HepG2 (cell line): ENCODE measurements at regions of chr22 and their contacts with region 1.

Region 1: DNA sequence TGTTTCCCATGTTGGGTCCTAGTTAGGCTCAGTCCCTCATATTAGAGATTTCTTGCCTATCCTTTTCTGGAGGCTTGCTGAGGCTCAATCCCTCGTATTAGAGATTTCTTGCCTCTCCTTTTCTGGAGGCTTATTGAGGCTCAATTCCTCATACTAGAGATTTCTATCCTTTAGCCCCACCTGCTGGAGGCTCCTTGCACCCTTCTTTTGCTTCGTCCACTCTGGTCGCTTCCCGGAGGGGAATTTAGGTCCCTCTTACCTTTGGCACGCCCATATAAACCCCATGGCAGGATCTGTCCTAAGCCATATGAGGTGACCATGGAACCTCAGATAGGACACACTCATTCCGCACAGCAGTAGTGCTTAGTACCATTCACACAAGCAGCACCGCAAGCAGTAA is 15.9 kb downstream of the CYP2D6 start:
- DNase-seq: peak; percentile 54
- ATAC-seq: peak; percentile 70
- H3K4me3 ChIP-seq: no peak overlapping the region
- H3K27ac ChIP-seq: no peak overlapping the region
- H3K4me1 ChIP-seq: peaks cover 10% of the 10 kb centered on the region
- H3K27me3 ChIP-seq: no peaks in the 10 kb centered on the region
- CTCF ChIP-seq: peak; percentile 62
- EP300 ChIP-seq: no peak
- POLR2A ChIP-seq: no peak
- RAD21 ChIP-seq: peak; percentile 56

Region 2: GRCh38 chr22:41697126-41697775 is 417.5 kb before region 1 on chr22:
- CTCF ChIA-PET with region 1: no interaction called
- POLR2A ChIA-PET with region 1: no interaction called
- in situ Hi-C with region 1: no loop called
- intact Hi-C with region 1: loop called (anchors 10 kb)
- DNase-seq: peak; percentile 81
- ATAC-seq: peak; percentile 91
- H3K4me3 ChIP-seq: peak overlapping the region; percentile 45 to 66 (median 53); a peak in 4 of 6 replicates
- H3K27ac ChIP-seq: no peak overlapping the region
- H3K4me1 ChIP-seq: peaks cover 16% of the 10 kb centered on the region
- H3K27me3 ChIP-seq: no peaks in the 10 kb centered on the region
- CTCF ChIP-seq: peak; percentile 96
- EP300 ChIP-seq: no peak
- POLR2A ChIP-seq: 0 out of 4 replicates have a peak, but pooled peaks of 1 of the 2 experiments have one; percentile 21
- RAD21 ChIP-seq: peak; percentile 93

Region 3: GRCh38 chr22:41951898-41952474 is 162.7 kb before region 1 on chr22 and contains the start of gene SMIM45:
- CTCF ChIA-PET with region 1: interaction called, 15 read pairs
- POLR2A ChIA-PET with region 1: no interaction called
- in situ Hi-C with region 1: no loop called
- intact Hi-C with region 1: loop called (anchors 5 kb)
- DNase-seq: no peak
- ATAC-seq: no peak
- H3K4me3 ChIP-seq: no peak within 1 kb of the TSS
- H3K27ac ChIP-seq: no peak within 1 kb of the TSS
- H3K4me1 ChIP-seq: peaks cover 43% of the 10 kb centered on the region
- H3K27me3 ChIP-seq: no peaks in the 10 kb centered on the region
- CTCF ChIP-seq: no peak
- EP300 ChIP-seq: no peak
- POLR2A ChIP-seq: no peak
- RAD21 ChIP-seq: no peak

Region 4: GRCh38 chr22:41957941-41958556 is 156.7 kb before region 1 on chr22:
- CTCF ChIA-PET with region 1: interaction called, 15 read pairs
- POLR2A ChIA-PET with region 1: no interaction called
- in situ Hi-C with region 1: no loop called
- intact Hi-C with region 1: loop called (anchors 5 kb)
- DNase-seq: no peak
- ATAC-seq: peak; percentile 71
- H3K4me3 ChIP-seq: peak overlapping the region in 2 of 3 experiments; percentile 27 to 43; a peak in 2 of 6 replicates
- H3K27ac ChIP-seq: no peak overlapping the region
- H3K4me1 ChIP-seq: no peaks in the 10 kb centered on the region
- H3K27me3 ChIP-seq: no peaks in the 10 kb centered on the region; a peak in 1 of 5 replicates
- CTCF ChIP-seq: no peak
- EP300 ChIP-seq: no peak
- POLR2A ChIP-seq: no peak
- RAD21 ChIP-seq: no peak

Region 5: GRCh38 chr22:41966607-41967240 is 148.0 kb before region 1 on chr22:
- CTCF ChIA-PET with region 1: interaction called, 13 read pairs
- POLR2A ChIA-PET with region 1: no interaction called
- in situ Hi-C with region 1: loop called (anchors 5 kb)
- intact Hi-C with region 1: loop called (anchors 1 kb)
- DNase-seq: peak; percentile 52
- ATAC-seq: peak; percentile 80
- H3K4me3 ChIP-seq: no peak overlapping the region
- H3K27ac ChIP-seq: no peak overlapping the region
- H3K4me1 ChIP-seq: peaks cover 11% of the 10 kb centered on the region; the same call in 1 of the 2 replicates
- H3K27me3 ChIP-seq: peaks cover 2 to 24% of the 10 kb centered on the region in 2 experiments; a peak in 4 of 5 replicates
- CTCF ChIP-seq: peak; percentile 78
- EP300 ChIP-seq: no peak
- POLR2A ChIP-seq: no peak
- RAD21 ChIP-seq: 0 out of 2 replicates have a peak, but pooled peaks have one; percentile 44

Region 6: DNA sequence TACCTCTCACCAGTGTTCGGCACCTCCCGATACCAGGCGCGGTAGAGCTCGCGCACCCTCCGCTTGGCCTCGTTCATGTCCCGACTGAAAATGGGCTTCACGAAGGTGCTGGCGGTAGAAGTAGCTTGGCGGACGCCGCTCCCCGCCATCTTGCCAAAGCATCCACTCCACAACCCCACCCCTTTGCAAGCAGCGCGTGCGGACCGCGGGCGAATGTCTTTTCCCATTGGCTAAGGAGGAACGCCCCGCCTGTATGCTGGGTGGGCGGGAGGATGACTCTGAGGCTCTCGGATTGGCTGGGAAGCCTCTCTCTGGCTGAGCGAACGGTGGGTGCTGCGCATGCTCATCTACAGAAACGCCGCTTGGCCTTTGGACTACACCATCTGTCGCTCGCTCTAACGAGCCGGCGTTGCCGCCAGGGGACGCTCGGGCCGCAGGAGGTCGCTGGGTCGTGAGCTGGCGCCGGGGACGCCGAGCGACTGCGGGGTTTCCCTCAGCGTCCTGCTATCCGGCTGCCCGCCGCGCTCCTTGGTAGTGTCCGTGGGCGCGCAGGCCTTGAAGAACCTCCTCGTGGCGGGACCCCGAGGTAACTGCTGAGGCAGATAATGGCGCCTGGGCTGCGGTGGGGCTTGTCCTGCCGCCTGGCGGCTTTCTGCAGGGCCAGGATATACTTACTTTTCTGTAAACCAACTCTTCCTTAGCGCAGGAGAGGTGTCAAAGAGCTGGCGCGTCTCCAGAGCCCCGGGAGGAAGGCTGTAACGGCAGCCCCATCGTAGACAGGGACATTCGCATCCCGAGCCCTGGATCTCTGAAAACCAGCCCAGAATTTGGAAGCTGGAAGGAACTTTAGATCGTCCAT is 23.9 kb before region 1 on chr22 and contains the start of gene NDUFA6:
- CTCF ChIA-PET with region 1: interaction called, 35 read pairs
- POLR2A ChIA-PET with region 1: interaction called, 10 read pairs
- in situ Hi-C with region 1: no loop called
- intact Hi-C with region 1: loop called (anchors 1 kb)
- DNase-seq: peak; percentile 97
- ATAC-seq: peak; percentile 95
- H3K4me3 ChIP-seq: peak within 1 kb of the TSS; percentile 84 to 98 (median 91)
- H3K27ac ChIP-seq: peak within 1 kb of the TSS; percentile 99
- H3K4me1 ChIP-seq: peaks cover 23% of the 10 kb centered on the region
- H3K27me3 ChIP-seq: no peaks in the 10 kb centered on the region
- CTCF ChIP-seq: peak; percentile 100
- EP300 ChIP-seq: peak in 1 of 2 experiments; percentile 53; a peak in 1 of 4 replicates
- POLR2A ChIP-seq: peak; percentile 86 to 96
- RAD21 ChIP-seq: peak; percentile 98
- total RNA-seq, gene NDUFA6: 87.8 and 107 TPM in 2 replicates

Region 7: DNA sequence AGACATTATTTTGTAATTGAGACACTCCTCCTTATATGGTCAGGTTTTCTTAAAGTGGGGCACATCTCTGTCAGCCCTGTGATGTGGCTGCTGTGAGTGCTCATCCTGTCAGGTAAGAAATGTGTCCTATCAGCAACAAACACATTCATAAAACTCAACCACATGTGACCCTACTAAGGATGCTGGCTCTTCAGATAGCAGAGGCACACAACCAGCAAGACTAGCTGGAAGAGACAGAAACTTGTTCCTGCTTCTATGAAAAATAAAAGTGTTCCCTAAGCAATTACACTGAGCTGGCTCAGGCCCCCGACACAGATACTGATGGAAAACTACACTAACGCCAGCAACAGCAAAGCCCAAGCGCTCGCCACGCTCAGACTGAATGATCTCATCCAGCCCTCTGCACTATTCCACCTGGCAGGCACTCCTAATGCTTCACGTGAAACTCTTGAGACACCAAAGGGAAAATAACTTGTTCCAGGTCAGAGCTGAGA is 65.7 kb after region 1 on chr22:
- CTCF ChIA-PET with region 1: no interaction called
- POLR2A ChIA-PET with region 1: no interaction called
- in situ Hi-C with region 1: no loop called
- intact Hi-C with region 1: no loop called
- DNase-seq: no peak
- ATAC-seq: no peak
- H3K4me3 ChIP-seq: no peak overlapping the region
- H3K27ac ChIP-seq: no peak overlapping the region
- H3K4me1 ChIP-seq: peaks cover 44% of the 10 kb centered on the region
- H3K27me3 ChIP-seq: no peaks in the 10 kb centered on the region
- CTCF ChIP-seq: no peak
- EP300 ChIP-seq: no peak
- POLR2A ChIP-seq: no peak
- RAD21 ChIP-seq: no peak